Activated CD4-positive, alpha-beta T cell treated with anti-CD3 and anti-CD28 coated beads, Interleukin-2, amount 10 ng/mL, durations not matched to agents 24 days and 14 days (primary cell): ENCODE measurements at regions of chr2 and their contacts with region 1.

Region 1: GRCh38 chr2:100562732-100563720 is at the start of gene PDCL3:
- DNase-seq: peak; percentile 99
- H3K4me3 Mint-ChIP-seq: peak within 1 kb of the TSS; percentile 99
- H3K27ac Mint-ChIP-seq: peak within 1 kb of the TSS; percentile 99
- H3K4me1 Mint-ChIP-seq: peaks cover 39% of the 10 kb centered on the region
- H3K27me3 Mint-ChIP-seq: no peaks in the 10 kb centered on the region
- total RNA-seq, gene PDCL3: 42.2 and 44.3 TPM in 2 replicates

Region 2: DNA sequence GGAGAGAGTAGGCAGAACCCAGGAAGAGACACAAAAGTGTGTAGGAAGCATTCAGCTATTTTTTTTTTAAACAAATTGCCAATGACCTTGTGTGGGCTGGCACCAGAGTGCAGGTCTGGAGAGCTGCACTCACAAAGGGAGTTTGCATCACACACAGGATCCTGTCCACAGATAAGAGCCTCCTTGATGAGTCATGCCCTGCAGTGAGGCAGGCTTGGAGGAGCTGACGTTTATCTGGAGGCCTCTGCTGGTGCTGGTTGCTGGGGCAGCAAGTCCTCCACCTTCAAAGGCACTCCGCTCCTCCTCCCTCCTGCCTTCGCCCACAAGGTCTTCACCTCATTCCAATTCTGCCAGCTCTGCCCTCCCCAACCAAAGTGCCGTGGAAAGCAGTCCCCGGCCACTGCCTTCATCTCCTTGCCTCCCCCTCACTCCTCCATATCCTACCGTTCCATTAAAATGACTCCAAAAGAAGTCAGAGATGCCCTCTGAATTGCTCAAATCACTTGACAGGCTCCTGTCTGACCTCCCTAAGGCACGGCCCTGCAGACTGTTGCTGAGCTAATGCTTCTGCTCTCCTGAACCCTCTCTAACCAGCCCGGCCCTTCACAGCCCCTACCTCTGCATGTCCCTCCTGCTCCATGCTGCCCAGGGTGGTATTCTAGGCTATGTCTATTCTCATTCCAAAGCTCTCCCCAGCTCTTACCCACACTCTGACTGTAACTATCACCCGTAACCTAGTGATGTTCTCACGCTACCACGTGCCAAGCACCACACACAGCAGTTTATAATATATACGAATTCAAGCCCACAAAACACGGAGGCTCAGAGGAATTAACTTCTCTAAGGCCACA is 271.7 kb before region 1 on chr2:
- intact Hi-C with region 1: loop called (anchors 2 kb)
- DNase-seq: peak; percentile 90
- H3K4me3 Mint-ChIP-seq: no peak overlapping the region
- H3K27ac Mint-ChIP-seq: no peak overlapping the region
- H3K4me1 Mint-ChIP-seq: peaks cover 6% of the 10 kb centered on the region
- H3K27me3 Mint-ChIP-seq: peaks cover 16% of the 10 kb centered on the region

Region 3: DNA sequence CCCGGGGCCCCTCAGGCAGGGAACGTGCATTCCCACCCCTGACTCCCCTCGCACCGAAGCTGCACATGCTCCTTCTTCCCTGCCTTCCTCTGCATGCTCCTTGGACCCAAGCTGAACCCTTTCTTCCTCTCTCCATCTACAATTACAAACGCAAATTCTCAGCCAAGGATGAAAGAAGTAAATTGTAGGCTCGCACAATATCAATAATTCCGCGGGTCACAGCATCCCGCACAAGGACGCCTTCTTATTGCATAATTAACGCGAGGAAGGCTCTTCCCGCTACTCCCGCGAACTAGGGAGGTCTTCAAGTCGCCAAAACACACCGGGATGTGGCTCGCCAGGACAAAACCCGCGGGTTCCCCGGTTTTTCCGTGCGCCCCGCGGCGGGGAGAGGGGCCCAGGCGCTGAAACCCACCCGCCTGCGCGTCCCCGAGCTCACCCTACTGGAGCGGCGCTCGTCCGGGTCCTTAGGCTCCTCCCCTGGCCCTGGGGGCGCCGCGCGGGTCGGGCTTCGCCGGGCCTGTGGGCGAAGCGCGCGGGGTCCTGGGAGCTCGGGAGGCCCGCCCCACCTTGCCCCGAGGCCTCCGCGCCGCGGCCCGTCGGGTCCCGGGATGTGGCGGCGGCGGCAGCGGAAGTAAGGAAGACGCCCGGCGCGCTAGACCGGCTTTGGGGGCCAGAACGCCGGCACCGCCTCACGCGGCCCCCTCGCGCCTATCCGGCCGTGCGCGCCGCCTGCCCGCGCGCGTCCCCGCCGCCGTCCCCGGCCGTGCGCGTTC is 145.9 kb before region 1 on chr2 and contains the start of gene CHST10:
- intact Hi-C with region 1: loop called (anchors 5 kb)
- DNase-seq: peak; percentile 86
- H3K4me3 Mint-ChIP-seq: peak within 1 kb of the TSS; percentile 82
- H3K27ac Mint-ChIP-seq: peak within 1 kb of the TSS; percentile 73
- H3K4me1 Mint-ChIP-seq: peaks cover 19% of the 10 kb centered on the region
- H3K27me3 Mint-ChIP-seq: peaks cover 6% of the 10 kb centered on the region
- total RNA-seq, gene CHST10: 6.6 and 8.0 TPM in 2 replicates

Region 4: GRCh38 chr2:100524331-100524730 is 38.7 kb before region 1 on chr2:
- intact Hi-C with region 1: no loop called
- DNase-seq: no peak
- H3K4me3 Mint-ChIP-seq: no peak overlapping the region
- H3K27ac Mint-ChIP-seq: no peak overlapping the region
- H3K4me1 Mint-ChIP-seq: no peaks in the 10 kb centered on the region
- H3K27me3 Mint-ChIP-seq: peaks cover 4% of the 10 kb centered on the region

Region 5: GRCh38 chr2:100580367-100581276 is 17.6 kb after region 1 on chr2:
- intact Hi-C with region 1: loop called (anchors 1 kb)
- DNase-seq: peak; percentile 87
- H3K4me3 Mint-ChIP-seq: peak overlapping the region; percentile 76
- H3K27ac Mint-ChIP-seq: peak overlapping the region; percentile 89
- H3K4me1 Mint-ChIP-seq: peaks cover 35% of the 10 kb centered on the region
- H3K27me3 Mint-ChIP-seq: no peaks in the 10 kb centered on the region

Region 6: GRCh38 chr2:100588071-100588786 is 25.2 kb after region 1 on chr2:
- intact Hi-C with region 1: loop called (anchors 2 kb)
- DNase-seq: peak; percentile 85
- H3K4me3 Mint-ChIP-seq: peak overlapping the region; percentile 32
- H3K27ac Mint-ChIP-seq: peak overlapping the region; percentile 67
- H3K4me1 Mint-ChIP-seq: peaks cover 39% of the 10 kb centered on the region
- H3K27me3 Mint-ChIP-seq: peaks cover 5% of the 10 kb centered on the region

Region 7: DNA sequence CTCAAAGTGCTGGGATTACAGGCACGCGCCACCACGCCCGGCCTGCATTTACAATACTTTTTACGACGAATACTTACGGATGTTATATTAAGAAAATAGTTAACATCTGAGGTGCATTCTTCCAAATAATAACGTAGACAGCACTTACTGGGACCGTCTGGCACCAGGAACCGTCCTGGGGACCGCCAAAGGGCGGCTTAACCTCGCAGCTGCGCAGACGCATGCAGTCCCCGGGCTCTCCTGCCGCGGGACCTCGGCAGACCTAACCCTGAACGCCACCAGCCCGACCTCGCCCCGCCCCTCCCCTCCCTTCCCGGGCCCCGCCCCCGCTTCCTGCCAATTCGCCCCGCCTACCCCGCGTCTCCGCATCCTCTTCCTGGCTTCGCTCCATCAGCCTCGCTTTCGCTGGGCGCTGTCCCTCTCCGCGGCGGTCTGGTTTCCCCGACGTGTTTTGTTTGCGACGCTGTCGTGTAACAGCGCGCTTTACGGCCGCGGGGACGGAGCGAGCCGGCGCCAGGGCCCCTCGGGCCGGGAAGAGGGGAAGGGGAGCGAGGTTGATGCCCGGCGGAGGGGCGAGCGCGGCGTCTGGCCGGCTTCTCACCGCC is 689.5 kb after region 1 on chr2 and contains the start of gene CNOT11:
- intact Hi-C with region 1: loop called (anchors 2 kb)
- DNase-seq: peak; percentile 99
- H3K4me3 Mint-ChIP-seq: peak within 1 kb of the TSS; percentile 93
- H3K27ac Mint-ChIP-seq: peak within 1 kb of the TSS; percentile 96
- H3K4me1 Mint-ChIP-seq: peaks cover 44% of the 10 kb centered on the region
- H3K27me3 Mint-ChIP-seq: no peaks in the 10 kb centered on the region
- total RNA-seq, gene CNOT11: 65.0 and 69.6 TPM in 2 replicates